ENCODE measurements at regions of chr17 and their contacts with region 1.

Region 1: DNA sequence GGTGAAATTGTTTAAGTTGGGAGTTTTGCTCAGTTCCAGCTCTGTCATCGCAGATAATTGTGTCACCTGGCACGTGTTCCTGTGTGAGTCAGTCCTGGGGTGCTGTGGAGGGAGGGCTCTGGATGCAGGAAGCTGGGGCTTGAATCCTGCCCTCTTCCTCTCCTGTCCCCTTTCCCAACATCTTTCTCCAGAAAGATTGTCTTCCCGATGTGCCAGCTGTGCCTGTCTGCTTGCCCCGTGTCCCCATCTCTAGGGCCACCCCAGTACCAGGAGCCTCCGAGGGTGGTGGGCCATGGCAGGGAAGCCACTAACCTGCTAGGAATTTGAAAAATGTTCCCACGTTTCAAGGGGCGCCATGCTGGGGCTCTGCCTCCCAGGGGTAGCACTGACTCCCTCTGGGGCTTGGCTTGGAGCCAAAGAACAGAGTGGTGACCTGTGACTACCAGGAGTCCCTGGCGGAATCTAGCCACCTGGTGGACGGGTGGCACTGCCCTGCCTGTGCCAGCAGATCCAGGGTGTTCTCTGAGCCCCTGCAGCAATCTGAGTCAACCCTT is 198.1 kb downstream of the ENGASE start:
- DNase-seq: no peak
- H3K4me3 ChIP-seq: no peak overlapping the region
- H3K27ac ChIP-seq: no peak overlapping the region
- H3K4me1 ChIP-seq: no peaks in the 10 kb centered on the region
- H3K27me3 ChIP-seq: no peaks in the 10 kb centered on the region
- CTCF ChIP-seq: no peak
- POLR2A ChIP-seq: no peak

Region 2: GRCh38 chr17:79461041-79461440 is 188.3 kb after region 1 on chr17:
- intact Hi-C with region 1: loop called (anchors 10 kb)
- DNase-seq: no peak
- H3K4me3 ChIP-seq: no peak overlapping the region
- H3K27ac ChIP-seq: no peak overlapping the region
- H3K4me1 ChIP-seq: peaks cover 4% of the 10 kb centered on the region
- H3K27me3 ChIP-seq: no peaks in the 10 kb centered on the region
- CTCF ChIP-seq: no peak
- POLR2A ChIP-seq: no peak